ENCODE measurements at regions of chr10 and their contacts with region 1.

Region 1: GRCh38 chr10:30433730-30434272 is at the start of gene MAP3K8:
- DNase-seq: peak; percentile 96
- ATAC-seq: peak; percentile 73
- H3K4me3 ChIP-seq: peak within 1 kb of the TSS; percentile 93 to 99 (median 97)
- H3K4me3 Mint-ChIP-seq: peak within 1 kb of the TSS; percentile 98
- H3K27ac ChIP-seq: peak within 1 kb of the TSS; percentile 95 to 99
- H3K27ac Mint-ChIP-seq: peak within 1 kb of the TSS; percentile 97
- H3K4me1 ChIP-seq: peaks cover 56 to 74% of the 10 kb centered on the region in 2 donors
- H3K4me1 Mint-ChIP-seq: peaks cover 71% of the 10 kb centered on the region
- H3K27me3 ChIP-seq: no peaks in the 10 kb centered on the region
- H3K27me3 Mint-ChIP-seq: no peaks in the 10 kb centered on the region
- CTCF ChIP-seq: no peak
- total RNA-seq, gene MAP3K8: 97.0 and 104 TPM in 2 replicates

Region 2: DNA sequence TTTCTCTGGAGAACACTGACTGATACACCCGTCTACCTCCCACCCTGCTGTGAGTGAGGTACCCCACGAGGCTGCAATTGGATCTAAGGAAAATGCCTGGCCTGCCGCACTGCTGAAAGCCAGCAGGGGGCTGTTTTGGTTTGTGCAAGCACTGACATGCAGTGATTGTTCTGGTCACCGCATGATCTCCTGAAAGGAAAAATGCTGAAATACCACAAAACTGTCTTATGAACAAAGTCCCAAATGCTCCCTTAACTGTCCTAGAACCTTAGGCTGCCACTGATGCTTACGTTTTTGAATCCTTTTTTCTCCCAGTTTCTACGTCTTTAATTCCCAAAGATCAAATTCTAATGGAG is 507.1 kb before region 1 on chr10:
- CTCF ChIA-PET with region 1: no interaction called
- POLR2A ChIA-PET with region 1: no interaction called
- intact Hi-C with region 1: no loop called
- DNase-seq: no peak
- ATAC-seq: no peak
- H3K4me3 ChIP-seq: no peak overlapping the region
- H3K4me3 Mint-ChIP-seq: no peak overlapping the region
- H3K27ac ChIP-seq: no peak overlapping the region
- H3K27ac Mint-ChIP-seq: no peak overlapping the region
- H3K4me1 ChIP-seq: no peaks in the 10 kb centered on the region
- H3K4me1 Mint-ChIP-seq: no peaks in the 10 kb centered on the region
- H3K27me3 ChIP-seq: no peaks in the 10 kb centered on the region
- H3K27me3 Mint-ChIP-seq: no peaks in the 10 kb centered on the region
- CTCF ChIP-seq: no peak

Region 3: DNA sequence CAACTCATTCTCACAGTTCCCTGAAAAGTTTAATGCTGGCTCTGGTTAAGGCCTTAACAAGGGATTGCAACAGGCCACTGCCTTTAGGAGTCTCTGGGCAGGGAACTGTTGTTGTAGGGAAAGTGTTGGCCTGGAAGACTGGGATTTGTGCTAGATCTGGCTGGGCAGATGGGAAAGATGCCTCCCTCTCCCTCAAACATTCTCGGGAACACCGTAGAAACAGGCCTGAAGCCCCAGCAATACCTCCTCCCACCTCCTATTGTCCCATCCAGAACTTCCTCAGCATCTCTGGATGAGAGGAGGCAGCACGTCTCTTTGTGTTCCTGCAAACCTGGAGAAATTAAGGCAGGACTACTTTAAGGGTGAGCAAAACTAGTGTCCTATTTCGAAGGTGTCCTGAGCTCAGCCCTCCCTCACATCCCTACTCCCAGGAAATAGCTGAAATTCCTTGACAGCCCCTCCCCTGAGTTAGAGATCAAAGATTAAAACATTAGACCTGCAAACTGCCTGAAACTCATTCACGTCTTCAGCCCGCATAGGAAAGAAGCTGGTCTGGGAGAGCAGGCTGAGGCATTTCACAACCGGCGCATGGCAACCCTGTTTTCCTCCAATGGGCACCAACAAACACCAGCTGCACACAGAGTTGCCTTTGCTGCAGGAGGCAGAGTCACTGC is 10.7 kb before region 1 on chr10:
- CTCF ChIA-PET with region 1: interaction called, 42 read pairs
- POLR2A ChIA-PET with region 1: interaction called, 31 read pairs
- intact Hi-C with region 1: loop called (anchors 1 kb)
- DNase-seq: peak; percentile 52
- ATAC-seq: peak; percentile 23
- H3K4me3 ChIP-seq: peak overlapping the region in 1 of 5 experiments; percentile 26
- H3K4me3 Mint-ChIP-seq: peak overlapping the region; percentile 73
- H3K27ac ChIP-seq: peak overlapping the region; percentile 40 to 60
- H3K27ac Mint-ChIP-seq: peak overlapping the region; percentile 86
- H3K4me1 ChIP-seq: peaks cover 57 to 70% of the 10 kb centered on the region in 2 donors
- H3K4me1 Mint-ChIP-seq: peaks cover 65% of the 10 kb centered on the region
- H3K27me3 ChIP-seq: no peaks in the 10 kb centered on the region
- H3K27me3 Mint-ChIP-seq: no peaks in the 10 kb centered on the region
- CTCF ChIP-seq: no peak

Region 4: GRCh38 chr10:30493609-30494530 is 60.1 kb after region 1 on chr10:
- CTCF ChIA-PET with region 1: interaction called, 12 read pairs
- POLR2A ChIA-PET with region 1: interaction called, 5 read pairs
- intact Hi-C with region 1: loop called (anchors 2 kb)
- DNase-seq: peak; percentile 63
- ATAC-seq: peak; percentile 53
- H3K4me3 ChIP-seq: peak overlapping the region in 3 of 5 experiments; percentile 14 to 21 (median 14)
- H3K4me3 Mint-ChIP-seq: peak overlapping the region; percentile 77
- H3K27ac ChIP-seq: peak overlapping the region; percentile 62 to 88
- H3K27ac Mint-ChIP-seq: peak overlapping the region; percentile 91
- H3K4me1 ChIP-seq: peaks cover 97 to 98% of the 10 kb centered on the region in 2 donors
- H3K4me1 Mint-ChIP-seq: peaks cover 91% of the 10 kb centered on the region
- H3K27me3 ChIP-seq: no peaks in the 10 kb centered on the region
- H3K27me3 Mint-ChIP-seq: no peaks in the 10 kb centered on the region
- CTCF ChIP-seq: peak; percentile 42